Brain microvascular endothelial cell (primary cell): ENCODE measurements at regions of chr9 and their contacts with region 1.

Region 1: DNA sequence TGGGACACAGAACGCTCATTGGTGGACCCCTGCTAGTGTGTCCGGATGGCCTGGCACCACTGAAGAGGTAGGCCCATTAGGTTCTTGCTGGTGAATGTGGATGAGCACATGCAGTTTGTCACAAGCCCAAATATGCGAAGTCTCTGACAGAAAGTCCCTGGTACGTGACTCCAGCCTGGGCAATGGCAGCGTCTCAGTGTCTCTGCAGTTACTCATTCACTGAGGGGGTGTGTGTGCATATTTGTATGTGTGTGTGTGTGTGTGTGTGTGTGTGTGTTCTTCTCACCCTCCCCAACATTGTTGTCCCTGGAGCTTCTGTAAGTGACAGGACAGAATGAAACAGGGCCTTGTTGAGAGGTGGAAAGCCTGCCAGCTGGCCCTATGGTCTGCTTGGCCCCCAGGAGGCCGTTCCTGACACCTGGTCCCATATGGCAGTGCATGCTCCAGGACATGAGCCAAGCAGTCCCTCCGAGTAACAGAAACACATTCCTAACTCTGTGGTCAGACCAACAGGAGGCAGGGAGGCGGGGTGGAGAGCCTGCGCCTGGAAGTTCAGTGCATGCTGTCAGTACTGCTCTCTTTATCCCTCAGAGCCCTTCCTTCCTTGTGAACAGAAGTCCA is 169.9 kb downstream of the SLC28A3 start:
- DNase-seq: peak; percentile 96
- H3K4me3 ChIP-seq: no peak overlapping the region
- H3K27ac ChIP-seq: peak overlapping the region; percentile 74
- H3K27me3 ChIP-seq: no peaks in the 10 kb centered on the region
- CTCF ChIP-seq: peak; percentile 32

Region 2: GRCh38 chr9:83980395-83981125 is 190.1 kb before region 1 on chr9 and contains the start of gene RMI1:
- in situ Hi-C with region 1: loop called (anchors 25 kb)
- DNase-seq: peak; percentile 97
- H3K4me3 ChIP-seq: peak within 1 kb of the TSS; percentile 99
- H3K27ac ChIP-seq: peak within 1 kb of the TSS; percentile 96
- H3K27me3 ChIP-seq: no peaks in the 10 kb centered on the region
- CTCF ChIP-seq: no peak

Region 3: GRCh38 chr9:84419031-84419602 is 248.5 kb after region 1 on chr9:
- in situ Hi-C with region 1: no loop called
- DNase-seq: peak; percentile 2
- H3K4me3 ChIP-seq: no peak overlapping the region
- H3K27ac ChIP-seq: no peak overlapping the region
- H3K27me3 ChIP-seq: no peaks in the 10 kb centered on the region
- CTCF ChIP-seq: peak; percentile 34